ENCODE measurements at regions of chr19 and their contacts with region 1.

Region 1: GRCh38 chr19:5031231-5032100 is 62.6 kb downstream of the KDM4B start:
- DNase-seq: peak; percentile 94
- CTCF ChIP-seq: peak; percentile 94

Region 2: GRCh38 chr19:4803736-4804695 is 227.4 kb before region 1 on chr19:
- in situ Hi-C with region 1: loop called (anchors 10 kb)
- DNase-seq: peak; percentile 84
- CTCF ChIP-seq: peak; percentile 91

Region 3: GRCh38 chr19:4870025-4870700 is 161.3 kb before region 1 on chr19:
- in situ Hi-C with region 1: loop called (anchors 10 kb)
- DNase-seq: no peak
- CTCF ChIP-seq: no peak

Region 4: GRCh38 chr19:5225486-5226345 is 194.2 kb after region 1 on chr19:
- in situ Hi-C with region 1: no loop called
- DNase-seq: no peak
- CTCF ChIP-seq: peak; percentile 43

Measured in GM13976 (cell line).